Activated CD4-positive, alpha-beta T cell treated with anti-CD3 and anti-CD28 coated beads for 36 hours (primary cell): ENCODE measurements at regions of chr1 and their contacts with region 1.

Region 1: GRCh38 chr1:163528710-163529348 is 207.1 kb downstream of the NUF2 start:
- DNase-seq: peak; percentile 36
- ATAC-seq: no peak
- H3K4me3 Mint-ChIP-seq: no peak overlapping the region
- H3K27ac Mint-ChIP-seq: no peak overlapping the region
- H3K4me1 Mint-ChIP-seq: no peaks in the 10 kb centered on the region
- H3K27me3 Mint-ChIP-seq: peaks cover 4% of the 10 kb centered on the region

Region 2: GRCh38 chr1:163106364-163106987 is 422.4 kb before region 1 on chr1:
- CTCF ChIA-PET with region 1: no interaction called
- POLR2A ChIA-PET with region 1: no interaction called
- intact Hi-C with region 1: no loop called
- DNase-seq: no peak
- ATAC-seq: no peak
- H3K4me3 Mint-ChIP-seq: no peak overlapping the region
- H3K27ac Mint-ChIP-seq: no peak overlapping the region
- H3K4me1 Mint-ChIP-seq: no peaks in the 10 kb centered on the region
- H3K27me3 Mint-ChIP-seq: peaks cover 18% of the 10 kb centered on the region

Region 3: GRCh38 chr1:163410073-163410999 is 118.5 kb before region 1 on chr1:
- CTCF ChIA-PET with region 1: no interaction called
- POLR2A ChIA-PET with region 1: no interaction called
- intact Hi-C with region 1: loop called in 1 of 2 experiments (anchors 2 kb)
- DNase-seq: peak; percentile 56
- ATAC-seq: no peak
- H3K4me3 Mint-ChIP-seq: no peak overlapping the region
- H3K27ac Mint-ChIP-seq: no peak overlapping the region
- H3K4me1 Mint-ChIP-seq: peaks cover 2% of the 10 kb centered on the region
- H3K27me3 Mint-ChIP-seq: peaks cover 14% of the 10 kb centered on the region

Region 4: GRCh38 chr1:163583661-163584181 is 54.9 kb after region 1 on chr1:
- CTCF ChIA-PET with region 1: no interaction called
- POLR2A ChIA-PET with region 1: no interaction called
- intact Hi-C with region 1: no loop called
- DNase-seq: no peak
- ATAC-seq: no peak
- H3K4me3 Mint-ChIP-seq: no peak overlapping the region
- H3K27ac Mint-ChIP-seq: no peak overlapping the region
- H3K4me1 Mint-ChIP-seq: no peaks in the 10 kb centered on the region
- H3K27me3 Mint-ChIP-seq: no peaks in the 10 kb centered on the region

Region 5: GRCh38 chr1:165073185-165074007 is 1544.6 kb after region 1 on chr1:
- CTCF ChIA-PET with region 1: no interaction called
- POLR2A ChIA-PET with region 1: no interaction called
- intact Hi-C with region 1: loop called in 1 of 2 experiments (anchors 5 kb)
- DNase-seq: no peak
- ATAC-seq: peak; percentile 33
- H3K4me3 Mint-ChIP-seq: no peak overlapping the region
- H3K27ac Mint-ChIP-seq: no peak overlapping the region
- H3K4me1 Mint-ChIP-seq: no peaks in the 10 kb centered on the region
- H3K27me3 Mint-ChIP-seq: no peaks in the 10 kb centered on the region